Heart right ventricle (tissue), 16 donors: ENCODE measurements at regions of chr3 and their contacts with region 1.

Region 1: GRCh38 chr3:188262913-188263683 is 109.1 kb downstream of the LPP start:
- DNase-seq: peak in 1 of 2 donors; percentile 62
- ATAC-seq: peak; percentile 50 to 89 (median 84)
- H3K4me3 ChIP-seq: no peak overlapping the region
- H3K27ac ChIP-seq: peak overlapping the region; percentile 73 to 93 (median 86)
- H3K4me1 ChIP-seq: peaks cover 26 to 98% (median 74%) of the 10 kb centered on the region in 9 donors
- H3K27me3 ChIP-seq: no peaks in the 10 kb centered on the region
- CTCF ChIP-seq: no peak

Region 2: DNA sequence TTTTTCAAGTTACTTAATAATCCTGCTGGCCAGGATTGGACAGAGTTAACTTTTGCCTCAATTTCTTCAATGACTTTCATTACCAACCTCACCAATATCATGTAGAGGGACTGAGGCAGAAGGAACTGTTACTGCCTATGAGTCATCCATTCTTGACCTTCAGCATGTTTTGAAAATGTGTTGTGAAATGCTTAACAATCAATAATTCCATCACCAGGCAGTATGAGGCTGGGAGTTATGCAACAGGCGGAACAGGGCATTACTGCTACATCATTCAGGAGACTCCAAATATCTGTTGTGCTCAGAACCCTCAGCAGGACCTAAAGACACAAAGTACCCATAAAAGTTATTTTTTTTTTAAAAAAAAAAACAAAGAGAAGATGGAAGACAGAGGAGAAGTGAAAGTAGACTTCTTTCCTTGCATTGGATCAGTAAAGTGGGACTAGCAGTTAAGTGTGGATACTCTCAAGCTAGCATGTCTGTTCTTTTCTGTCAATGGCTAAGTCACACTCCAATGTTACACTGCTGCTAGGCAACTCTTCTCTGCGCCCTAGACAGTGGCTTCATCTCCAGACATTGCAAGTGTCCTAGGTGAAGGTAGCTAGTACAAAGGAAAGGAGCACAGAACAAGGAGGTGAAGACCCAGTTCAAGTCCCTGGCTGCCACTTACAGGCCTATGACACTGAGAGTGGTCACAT is 294.1 kb before region 1 on chr3:
- intact Hi-C with region 1: loop called in 1 of 10 experiments (anchors 10 kb)
- DNase-seq: no peak
- ATAC-seq: peak in 2 of 8 donors; percentile 5 to 63
- H3K4me3 ChIP-seq: no peak overlapping the region
- H3K27ac ChIP-seq: peak overlapping the region in 2 of 10 donors; percentile 6 to 71
- H3K4me1 ChIP-seq: peaks cover 0 to 49% (median 9%) of the 10 kb centered on the region in 9 donors
- H3K27me3 ChIP-seq: no peaks in the 10 kb centered on the region
- CTCF ChIP-seq: no peak

Region 3: DNA sequence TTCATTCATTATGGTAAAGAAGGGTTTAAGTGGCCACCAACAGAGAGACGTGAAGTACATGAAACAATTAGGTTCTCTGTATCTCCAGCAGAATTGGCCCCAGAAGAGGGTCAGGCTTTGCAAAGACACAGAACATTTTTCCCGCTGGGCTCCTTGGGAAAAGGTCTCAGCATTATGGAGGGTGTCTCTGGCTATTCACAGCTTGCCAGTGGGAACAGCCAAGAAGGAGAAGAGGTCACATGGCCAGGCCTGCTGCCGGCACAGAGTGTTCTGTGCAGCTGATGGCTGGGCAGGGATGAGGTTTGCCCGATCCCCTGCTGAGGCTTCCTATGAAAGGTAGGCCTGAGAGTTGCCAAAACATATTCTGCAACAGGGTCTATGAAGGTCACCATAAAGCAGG is 186.9 kb before region 1 on chr3:
- intact Hi-C with region 1: loop called in 1 of 10 experiments (anchors 10 kb)
- DNase-seq: peak in 1 of 2 donors; percentile 26
- ATAC-seq: peak in 7 of 8 donors; percentile 26 to 80 (median 69)
- H3K4me3 ChIP-seq: no peak overlapping the region
- H3K27ac ChIP-seq: peak overlapping the region in 8 of 10 donors; percentile 3 to 65 (median 45)
- H3K4me1 ChIP-seq: peaks cover 0 to 13% (median 8%) of the 10 kb centered on the region in 9 donors
- H3K27me3 ChIP-seq: no peaks in the 10 kb centered on the region
- CTCF ChIP-seq: no peak

Region 4: DNA sequence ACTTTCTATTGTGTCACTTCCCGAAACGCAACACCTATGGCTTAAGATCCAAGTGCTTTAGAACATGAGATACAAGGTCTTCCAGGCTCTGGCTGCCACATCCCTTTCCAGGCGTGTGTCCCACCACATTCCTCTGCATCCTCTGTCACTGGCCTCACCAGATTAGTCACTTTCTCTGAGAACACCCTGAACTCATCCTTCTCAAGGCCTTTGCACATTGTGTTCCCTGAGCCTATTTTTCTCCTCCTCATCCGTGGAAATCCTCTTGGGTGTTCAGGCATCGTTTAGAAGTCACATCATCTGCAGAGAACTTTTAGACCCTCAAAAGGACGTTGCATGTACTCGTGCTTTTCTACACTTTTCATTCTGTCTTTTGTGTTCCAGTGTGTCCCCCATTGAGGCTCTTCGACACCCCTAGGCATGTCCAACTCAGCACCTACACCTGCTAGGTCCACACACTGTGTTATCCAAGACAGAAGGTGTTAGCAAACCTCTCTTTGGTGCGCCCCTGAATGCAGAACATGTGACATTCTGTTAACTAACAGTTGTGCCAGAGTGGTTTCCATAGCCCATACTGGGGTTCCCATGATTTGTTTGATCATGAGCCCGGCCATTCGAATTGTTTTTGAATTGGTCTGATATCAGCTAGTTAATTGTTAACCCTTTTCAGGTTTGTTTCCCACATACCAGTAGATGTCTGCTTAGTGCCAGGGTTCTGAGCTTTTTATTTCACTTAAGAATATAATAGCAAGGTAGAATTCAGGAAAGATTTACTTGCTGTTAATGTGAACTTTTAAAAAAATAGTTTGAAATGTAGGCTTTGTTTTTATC is 41.9 kb before region 1 on chr3:
- intact Hi-C with region 1: loop called in 2 of 10 experiments (anchors 5 kb)
- DNase-seq: no peak
- ATAC-seq: peak; percentile 18 to 96 (median 67)
- H3K4me3 ChIP-seq: no peak overlapping the region
- H3K27ac ChIP-seq: peak overlapping the region in 9 of 10 donors; percentile 4 to 75 (median 68)
- H3K4me1 ChIP-seq: peaks cover 0 to 80% (median 71%) of the 10 kb centered on the region in 9 donors
- H3K27me3 ChIP-seq: no peaks in the 10 kb centered on the region
- CTCF ChIP-seq: no peak

Region 5: GRCh38 chr3:188339410-188340295 is 76.6 kb after region 1 on chr3:
- intact Hi-C with region 1: loop called in 1 of 10 experiments (anchors 5 kb)
- DNase-seq: no peak
- ATAC-seq: no peak
- H3K4me3 ChIP-seq: no peak overlapping the region
- H3K27ac ChIP-seq: peak overlapping the region in 6 of 10 donors; percentile 2 to 33 (median 10)
- H3K4me1 ChIP-seq: peaks cover 0 to 55% (median 26%) of the 10 kb centered on the region in 9 donors
- H3K27me3 ChIP-seq: no peaks in the 10 kb centered on the region
- CTCF ChIP-seq: no peak